ENCODE measurements at regions of chr6 and their contacts with region 1.

Region 1: GRCh38 chr6:109382576-109383437 is 540 bp upstream of the CD164 start:
- H3K4me3 Mint-ChIP-seq: peak overlapping the region; percentile 94
- H3K27ac Mint-ChIP-seq: peak overlapping the region; percentile 100
- H3K4me1 Mint-ChIP-seq: peaks cover 44% of the 10 kb centered on the region
- H3K27me3 Mint-ChIP-seq: no peaks in the 10 kb centered on the region

Region 2: GRCh38 chr6:108558372-108559096 is 824.3 kb before region 1 on chr6:
- intact Hi-C with region 1: loop called (anchors 2 kb)
- H3K4me3 Mint-ChIP-seq: peak overlapping the region; percentile 87
- H3K27ac Mint-ChIP-seq: peak overlapping the region; percentile 93
- H3K4me1 Mint-ChIP-seq: peaks cover 40% of the 10 kb centered on the region
- H3K27me3 Mint-ChIP-seq: peaks cover 14% of the 10 kb centered on the region

Region 3: DNA sequence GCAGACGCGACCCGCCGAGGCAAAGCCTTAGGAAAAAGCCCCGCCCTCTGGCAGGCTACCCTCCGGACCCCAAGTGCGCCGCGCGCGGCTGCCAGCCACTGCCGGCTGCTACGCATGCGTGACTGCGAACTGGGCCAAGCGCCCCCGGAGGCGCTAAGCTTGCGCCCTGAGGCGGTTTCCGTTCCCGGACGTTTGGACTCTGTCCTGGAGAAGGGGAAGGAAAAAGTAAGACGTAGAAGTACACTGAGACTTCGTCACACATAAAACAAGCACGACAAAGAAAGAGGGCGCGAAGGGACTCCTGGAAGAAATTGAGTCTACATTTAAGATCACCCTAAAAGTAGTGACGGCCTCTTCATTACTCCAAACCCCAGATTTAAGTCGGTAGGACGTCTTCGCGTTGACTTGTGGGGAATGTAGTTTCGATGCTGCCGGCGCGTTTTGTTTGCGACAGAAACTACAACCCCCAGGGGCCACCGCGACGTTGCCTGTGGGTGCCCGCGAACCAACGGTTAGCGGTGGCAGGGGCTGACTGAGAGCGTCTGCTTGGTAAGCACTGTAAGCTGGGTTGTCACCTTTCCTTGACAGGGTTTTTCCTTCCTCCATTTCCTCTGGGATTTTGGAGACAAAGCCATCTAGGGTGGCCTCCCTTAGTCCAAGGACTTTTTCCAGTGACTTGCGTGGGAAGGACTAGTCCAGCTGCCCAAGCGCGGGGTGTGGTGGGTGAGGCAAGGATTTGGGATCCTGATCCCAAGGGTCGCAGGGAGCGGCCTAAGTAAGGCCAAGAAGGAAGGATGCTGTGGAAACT is 287.6 kb before region 1 on chr6 and contains the start of gene CEP57L1:
- intact Hi-C with region 1: loop called (anchors 1 kb)
- H3K4me3 Mint-ChIP-seq: peak within 1 kb of the TSS; percentile 88
- H3K27ac Mint-ChIP-seq: peak within 1 kb of the TSS; percentile 100
- H3K4me1 Mint-ChIP-seq: peaks cover 26% of the 10 kb centered on the region
- H3K27me3 Mint-ChIP-seq: no peaks in the 10 kb centered on the region

Region 4: DNA sequence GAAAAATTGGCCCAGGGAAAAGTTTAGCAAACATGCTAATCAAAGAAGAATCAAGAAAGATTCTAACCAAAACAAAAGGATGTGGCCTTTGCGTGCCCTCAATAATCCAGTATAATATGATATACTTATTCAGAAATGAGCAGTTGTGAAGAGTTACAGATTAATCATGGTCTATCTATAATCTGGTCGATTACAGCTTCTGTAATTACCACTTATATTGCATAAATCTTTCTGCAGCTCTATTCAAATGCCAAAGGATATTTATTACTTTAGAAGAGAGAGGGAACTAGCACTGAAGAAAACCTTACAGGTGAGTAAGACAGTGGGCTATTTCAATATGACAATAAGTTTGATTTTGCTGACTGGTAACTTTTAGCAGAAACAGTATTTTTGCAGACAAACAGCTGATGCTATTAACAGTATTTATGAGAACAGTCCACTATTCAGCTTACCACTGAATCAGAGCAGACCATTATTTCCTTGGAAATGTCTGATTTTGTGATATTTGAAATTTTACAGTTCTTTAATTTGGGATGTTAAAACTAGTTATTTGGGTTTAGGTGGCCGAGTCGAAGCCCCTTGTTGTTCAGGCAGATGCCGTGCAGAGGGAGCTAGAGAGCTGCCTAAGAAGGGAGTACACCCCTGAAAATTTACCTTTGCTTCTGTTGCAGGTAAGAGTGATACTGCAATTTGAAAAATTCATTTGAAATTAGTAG is 195.2 kb before region 1 on chr6:
- intact Hi-C with region 1: loop called (anchors 1 kb)
- H3K4me3 Mint-ChIP-seq: no peak overlapping the region
- H3K27ac Mint-ChIP-seq: no peak overlapping the region
- H3K4me1 Mint-ChIP-seq: no peaks in the 10 kb centered on the region
- H3K27me3 Mint-ChIP-seq: peaks cover 5% of the 10 kb centered on the region

Region 5: DNA sequence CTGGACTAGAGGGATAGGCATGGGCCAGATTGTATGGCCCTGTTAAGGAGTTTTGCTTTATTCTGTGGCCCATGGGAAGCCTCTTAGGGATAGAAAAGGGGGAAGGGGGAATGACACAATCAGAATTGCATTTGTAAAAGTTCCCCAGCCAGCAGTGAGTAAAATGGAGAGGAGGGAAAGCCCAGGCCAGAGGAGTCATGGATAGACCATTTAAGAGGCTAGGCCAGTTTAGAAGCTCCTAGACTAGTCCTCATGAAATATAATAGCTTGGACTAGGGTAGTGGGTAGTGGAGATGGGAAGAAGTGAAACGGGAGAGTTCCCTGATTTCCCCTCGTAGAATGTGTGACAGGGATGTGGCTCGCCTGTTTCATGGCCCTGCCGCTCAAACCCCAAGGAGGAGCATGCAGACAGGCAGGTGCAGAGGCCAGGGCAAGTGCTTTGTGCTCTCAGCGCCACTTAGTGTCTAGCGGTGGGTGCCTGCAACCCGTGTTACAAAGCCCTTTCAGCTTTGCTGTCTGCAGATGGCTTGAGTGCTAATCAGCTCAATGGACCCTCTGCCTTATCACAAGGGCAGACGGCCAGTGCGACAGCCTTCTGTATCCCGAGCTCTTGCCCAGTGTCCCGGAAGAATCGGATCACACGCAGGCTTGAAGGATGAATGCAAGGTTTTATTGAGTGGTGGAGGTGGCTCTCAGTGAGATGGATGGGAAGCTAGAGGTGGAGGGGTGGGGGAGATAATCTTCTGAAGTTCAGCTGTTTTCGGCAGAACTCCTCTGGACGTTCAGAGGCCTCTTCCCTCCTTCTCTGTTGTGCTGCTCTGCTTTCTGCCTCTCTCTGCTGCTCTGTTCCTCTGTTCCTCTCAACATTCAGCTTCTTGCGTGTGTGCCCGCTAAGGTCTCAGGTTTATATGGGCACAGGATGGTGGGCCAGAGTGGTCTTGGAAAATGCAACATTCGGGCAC is 146.4 kb before region 1 on chr6:
- intact Hi-C with region 1: loop called (anchors 5 kb)
- H3K4me3 Mint-ChIP-seq: no peak overlapping the region
- H3K27ac Mint-ChIP-seq: peak overlapping the region; percentile 80
- H3K4me1 Mint-ChIP-seq: peaks cover 52% of the 10 kb centered on the region
- H3K27me3 Mint-ChIP-seq: no peaks in the 10 kb centered on the region

Region 6: GRCh38 chr6:109322825-109323224 is 60.0 kb before region 1 on chr6:
- intact Hi-C with region 1: loop called (anchors 5 kb)
- H3K4me3 Mint-ChIP-seq: no peak overlapping the region
- H3K27ac Mint-ChIP-seq: no peak overlapping the region
- H3K4me1 Mint-ChIP-seq: peaks cover 20% of the 10 kb centered on the region
- H3K27me3 Mint-ChIP-seq: no peaks in the 10 kb centered on the region

Region 7: DNA sequence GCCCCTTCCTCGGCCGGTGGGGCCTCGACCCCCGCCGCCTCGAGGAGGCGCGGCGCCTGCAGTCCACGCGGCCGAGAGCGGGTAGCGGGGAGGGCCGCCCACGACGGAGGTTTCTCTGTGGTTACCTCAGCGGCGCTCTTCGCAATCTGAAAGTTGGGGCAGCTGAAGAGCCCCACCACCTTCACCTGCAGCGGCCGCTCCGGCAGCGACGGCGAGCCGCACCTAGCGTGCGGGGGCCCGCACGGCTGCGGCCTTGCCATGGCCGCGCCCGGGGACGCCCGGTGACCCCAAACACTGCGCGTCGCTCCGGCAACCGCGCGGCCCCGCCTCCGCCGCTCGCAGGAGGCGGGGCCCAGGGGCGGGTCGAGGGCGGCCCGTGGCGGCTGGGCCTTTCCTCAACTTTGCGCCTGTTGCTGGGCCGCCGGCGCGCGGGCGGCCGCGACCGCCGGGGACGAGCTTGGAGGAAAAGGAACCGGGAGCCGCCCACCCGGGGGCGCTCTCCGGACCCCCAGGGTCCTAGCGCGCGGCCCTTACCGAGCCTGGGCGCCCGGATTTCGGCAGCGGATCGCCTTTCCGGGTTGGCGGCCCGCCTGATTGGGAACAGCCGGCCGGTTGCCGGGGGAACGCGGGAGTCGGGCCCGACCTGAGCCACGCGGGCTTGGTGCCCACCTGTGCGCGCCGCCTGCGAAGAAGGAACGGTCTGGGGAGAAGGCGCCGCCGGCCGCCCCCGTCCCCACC is 57.7 kb after region 1 on chr6 and contains the starts of genes PPIL6 and SMPD2:
- intact Hi-C with region 1: loop called (anchors 5 kb)
- H3K4me3 Mint-ChIP-seq: peak within 1 kb of the TSS; percentile 81
- H3K27ac Mint-ChIP-seq: peak within 1 kb of the TSS; percentile 86
- H3K4me1 Mint-ChIP-seq: peaks cover 49% of the 10 kb centered on the region
- H3K27me3 Mint-ChIP-seq: no peaks in the 10 kb centered on the region

Measured in dendritic cell treated with granulocyte-macrophage colony-stimulating factor and Interleukin-4, amounts not matched to agents 40 ng/mL and 50 ng/mL, for 4 days (primary cell).